CD8-positive, alpha-beta T cell (primary cell): ENCODE measurements at regions of chr10 and their contacts with region 1.

Region 1: GRCh38 chr10:5446390-5446926 is 34.1 kb downstream of the NET1 start:
- DNase-seq: peak; percentile 42 to 83 (median 73)
- ATAC-seq: peak; percentile 67
- H3K4me3 ChIP-seq: peak overlapping the region; percentile 32 to 54
- H3K4me3 Mint-ChIP-seq: peak overlapping the region; percentile 85
- H3K27ac ChIP-seq: peak overlapping the region in 1 of 2 experiments; percentile 45
- H3K27ac Mint-ChIP-seq: peak overlapping the region; percentile 87
- H3K4me1 ChIP-seq: peaks cover 25% of the 10 kb centered on the region
- H3K4me1 Mint-ChIP-seq: peaks cover 32% of the 10 kb centered on the region
- H3K27me3 ChIP-seq: no peaks in the 10 kb centered on the region
- H3K27me3 Mint-ChIP-seq: no peaks in the 10 kb centered on the region
- CTCF ChIP-seq: no peak

Region 2: GRCh38 chr10:5423771-5424170 is 22.7 kb before region 1 on chr10:
- CTCF ChIA-PET with region 1: interaction called, 10 read pairs
- POLR2A ChIA-PET with region 1: interaction called, 3 read pairs
- intact Hi-C with region 1: no loop called
- DNase-seq: no peak
- ATAC-seq: no peak
- H3K4me3 ChIP-seq: no peak overlapping the region
- H3K4me3 Mint-ChIP-seq: no peak overlapping the region
- H3K27ac ChIP-seq: no peak overlapping the region
- H3K27ac Mint-ChIP-seq: no peak overlapping the region
- H3K4me1 ChIP-seq: no peaks in the 10 kb centered on the region
- H3K4me1 Mint-ChIP-seq: no peaks in the 10 kb centered on the region
- H3K27me3 ChIP-seq: no peaks in the 10 kb centered on the region
- H3K27me3 Mint-ChIP-seq: no peaks in the 10 kb centered on the region
- CTCF ChIP-seq: no peak

Region 3: DNA sequence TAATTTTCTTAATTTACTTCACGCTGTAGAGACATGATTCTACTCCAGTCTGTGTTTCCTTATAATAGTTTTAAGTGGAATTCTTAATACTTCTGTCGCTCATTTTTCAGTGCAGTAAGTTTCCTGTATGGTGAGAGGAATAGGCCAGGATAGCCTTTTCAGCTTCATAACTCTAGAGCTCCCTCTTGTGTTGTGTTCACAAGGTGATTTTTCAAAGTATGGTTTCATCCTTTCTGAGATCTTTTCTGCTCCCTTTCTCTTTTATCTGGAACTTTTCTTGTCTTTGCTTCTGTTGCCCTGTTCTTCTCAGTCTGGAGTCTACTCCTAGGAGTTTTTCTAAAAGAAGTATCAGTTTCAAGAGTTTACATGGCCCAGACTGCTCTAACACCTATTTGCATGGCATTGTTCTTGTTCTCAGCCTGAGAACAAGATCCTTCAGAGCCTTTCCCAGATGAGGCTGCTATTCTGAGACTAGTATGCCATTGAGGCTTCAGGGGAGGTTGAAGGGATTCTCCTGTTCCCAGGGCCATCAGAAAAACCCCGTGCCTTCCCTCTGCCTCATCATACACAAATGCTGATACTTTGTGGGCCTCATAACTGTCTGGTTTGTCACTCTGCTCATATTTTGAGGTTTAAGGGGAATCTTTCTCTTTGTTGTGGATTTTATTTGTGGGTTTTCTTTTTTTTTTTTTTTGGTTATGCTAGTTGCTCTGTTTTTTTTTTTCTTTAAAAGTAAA is 12.3 kb before region 1 on chr10:
- CTCF ChIA-PET with region 1: interaction called, 12 read pairs
- POLR2A ChIA-PET with region 1: no interaction called
- intact Hi-C with region 1: no loop called
- DNase-seq: peak in 2 of 9 experiments; percentile 46 to 57
- ATAC-seq: peak; percentile 58
- H3K4me3 ChIP-seq: no peak overlapping the region
- H3K4me3 Mint-ChIP-seq: no peak overlapping the region
- H3K27ac ChIP-seq: no peak overlapping the region
- H3K27ac Mint-ChIP-seq: peak overlapping the region; percentile 49
- H3K4me1 ChIP-seq: peaks cover 5% of the 10 kb centered on the region
- H3K4me1 Mint-ChIP-seq: peaks cover 12% of the 10 kb centered on the region
- H3K27me3 ChIP-seq: no peaks in the 10 kb centered on the region
- H3K27me3 Mint-ChIP-seq: no peaks in the 10 kb centered on the region
- CTCF ChIP-seq: peak; percentile 69

Region 4: GRCh38 chr10:5461914-5462840 is 15.7 kb after region 1 on chr10:
- CTCF ChIA-PET with region 1: interaction called, 11 read pairs
- POLR2A ChIA-PET with region 1: interaction called, 3 read pairs
- intact Hi-C with region 1: no loop called
- DNase-seq: no peak
- ATAC-seq: no peak
- H3K4me3 ChIP-seq: no peak overlapping the region
- H3K4me3 Mint-ChIP-seq: no peak overlapping the region
- H3K27ac ChIP-seq: no peak overlapping the region
- H3K27ac Mint-ChIP-seq: no peak overlapping the region
- H3K4me1 ChIP-seq: peaks cover 13% of the 10 kb centered on the region
- H3K4me1 Mint-ChIP-seq: peaks cover 12% of the 10 kb centered on the region
- H3K27me3 ChIP-seq: no peaks in the 10 kb centered on the region
- H3K27me3 Mint-ChIP-seq: no peaks in the 10 kb centered on the region
- CTCF ChIP-seq: no peak

Region 5: GRCh38 chr10:5563991-5564536 is 117.6 kb after region 1 on chr10:
- CTCF ChIA-PET with region 1: interaction called, 4 read pairs
- POLR2A ChIA-PET with region 1: interaction called, 3 read pairs
- intact Hi-C with region 1: loop called in 1 of 2 experiments (anchors 2 kb)
- DNase-seq: peak in 7 of 9 experiments; percentile 29 to 65 (median 50)
- ATAC-seq: peak; percentile 77
- H3K4me3 ChIP-seq: peak overlapping the region; percentile 25 to 50
- H3K4me3 Mint-ChIP-seq: peak overlapping the region; percentile 83
- H3K27ac ChIP-seq: peak overlapping the region; percentile 55 to 72
- H3K27ac Mint-ChIP-seq: peak overlapping the region; percentile 99
- H3K4me1 ChIP-seq: peaks cover 13% of the 10 kb centered on the region
- H3K4me1 Mint-ChIP-seq: peaks cover 17% of the 10 kb centered on the region
- H3K27me3 ChIP-seq: no peaks in the 10 kb centered on the region
- H3K27me3 Mint-ChIP-seq: no peaks in the 10 kb centered on the region
- CTCF ChIP-seq: no peak

Region 6: DNA sequence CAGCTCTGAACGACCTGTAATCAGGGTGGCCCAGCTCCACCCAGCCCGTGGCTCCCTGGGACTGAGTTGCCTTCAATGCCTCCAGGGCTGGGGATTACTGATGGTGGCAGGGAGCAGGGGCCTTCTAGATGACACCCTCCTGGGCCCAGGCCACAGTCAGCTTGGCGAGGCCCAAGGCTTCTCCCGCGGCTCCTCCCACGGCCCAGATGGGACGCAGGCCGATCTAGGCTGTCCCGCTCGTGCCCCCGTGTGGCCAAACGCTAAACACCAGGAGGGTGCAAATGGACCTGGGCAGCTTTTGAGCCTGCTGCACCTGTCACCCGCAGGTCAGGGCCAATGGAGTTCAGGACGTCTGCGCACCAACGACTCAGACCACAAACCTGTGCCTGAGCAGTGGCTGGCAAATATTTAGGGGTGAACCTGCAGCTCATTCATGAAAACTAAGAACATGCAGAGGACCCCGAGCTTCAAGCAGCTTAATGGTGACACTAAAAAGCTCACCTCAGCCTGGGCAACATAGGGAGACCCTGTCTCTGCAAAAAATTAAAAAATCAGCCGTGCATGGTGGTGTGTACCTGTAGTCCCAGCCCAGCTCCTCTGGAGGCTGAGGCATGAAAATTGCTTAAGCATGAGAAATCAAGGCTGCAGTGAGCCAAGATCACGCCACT is 176.8 kb after region 1 on chr10:
- CTCF ChIA-PET with region 1: interaction called, 377 read pairs
- POLR2A ChIA-PET with region 1: interaction called, 8 read pairs
- intact Hi-C with region 1: loop called (anchors 1 kb)
- DNase-seq: peak; percentile 50 to 84 (median 77)
- ATAC-seq: peak; percentile 98
- H3K4me3 ChIP-seq: no peak overlapping the region
- H3K4me3 Mint-ChIP-seq: no peak overlapping the region
- H3K27ac ChIP-seq: no peak overlapping the region
- H3K27ac Mint-ChIP-seq: no peak overlapping the region
- H3K4me1 ChIP-seq: peaks cover 4% of the 10 kb centered on the region
- H3K4me1 Mint-ChIP-seq: no peaks in the 10 kb centered on the region
- H3K27me3 ChIP-seq: no peaks in the 10 kb centered on the region
- H3K27me3 Mint-ChIP-seq: no peaks in the 10 kb centered on the region
- CTCF ChIP-seq: peak; percentile 85

Region 7: DNA sequence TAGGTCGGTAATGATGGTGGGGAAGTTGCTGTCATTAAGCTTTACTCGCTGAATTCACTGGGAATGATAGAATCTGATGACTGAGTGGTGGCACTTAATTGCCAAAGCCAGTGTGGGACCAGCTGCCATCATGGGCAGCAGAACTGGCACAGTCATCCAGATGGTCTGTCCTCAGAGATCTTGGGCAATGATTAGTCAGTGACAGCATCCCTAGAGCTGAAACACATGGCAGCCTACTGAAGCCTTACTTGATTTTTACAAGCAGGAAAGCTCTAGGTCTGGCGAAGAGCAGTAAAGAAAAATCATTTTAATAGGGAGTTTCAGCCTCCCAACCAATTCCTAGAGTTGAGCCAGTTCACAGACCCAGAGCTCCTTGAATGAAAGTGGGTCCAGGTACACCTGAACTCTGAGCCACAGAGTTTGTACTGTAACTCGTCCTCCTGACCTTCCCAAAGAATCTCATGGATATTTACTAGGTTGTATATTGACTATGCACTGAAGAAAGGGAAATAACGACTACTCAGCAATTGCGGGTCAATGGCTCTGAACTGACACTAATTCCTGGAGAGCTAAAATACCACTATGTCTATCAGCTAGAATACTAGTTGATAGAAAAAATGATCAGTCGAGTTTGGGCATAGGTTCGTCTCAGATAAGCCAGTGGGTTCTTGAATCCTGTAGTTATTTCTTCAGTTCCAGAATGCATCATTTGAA is 224.4 kb after region 1 on chr10:
- CTCF ChIA-PET with region 1: no interaction called
- POLR2A ChIA-PET with region 1: no interaction called
- intact Hi-C with region 1: no loop called
- DNase-seq: no peak
- ATAC-seq: no peak
- H3K4me3 ChIP-seq: no peak overlapping the region
- H3K4me3 Mint-ChIP-seq: no peak overlapping the region
- H3K27ac ChIP-seq: no peak overlapping the region
- H3K27ac Mint-ChIP-seq: no peak overlapping the region
- H3K4me1 ChIP-seq: peaks cover 4% of the 10 kb centered on the region
- H3K4me1 Mint-ChIP-seq: peaks cover 7% of the 10 kb centered on the region
- H3K27me3 ChIP-seq: no peaks in the 10 kb centered on the region
- H3K27me3 Mint-ChIP-seq: peaks cover 7% of the 10 kb centered on the region
- CTCF ChIP-seq: no peak

Region 8: DNA sequence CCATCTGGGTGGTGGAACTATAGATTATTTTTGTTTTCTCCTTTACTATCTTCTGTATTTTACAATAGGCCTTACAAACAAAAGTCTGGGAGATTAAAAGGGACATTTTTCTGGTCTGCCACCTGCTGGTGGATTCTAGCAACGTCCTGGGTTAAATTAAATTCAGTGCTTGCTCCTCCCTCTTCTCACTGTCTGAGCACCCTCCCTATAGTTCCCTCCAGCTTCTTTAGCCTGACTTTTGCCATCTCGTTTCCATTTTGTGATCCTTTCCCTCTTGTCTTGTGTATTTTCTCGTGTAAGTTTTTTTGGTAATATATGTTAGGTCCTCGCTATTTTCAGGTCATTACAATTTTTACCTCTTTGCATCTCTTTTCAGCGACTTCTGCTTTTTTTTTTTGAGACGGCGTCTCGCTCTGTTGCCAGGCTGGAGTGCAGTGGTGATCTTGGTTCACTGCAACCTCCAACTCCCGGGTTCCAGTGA is 427.1 kb after region 1 on chr10:
- CTCF ChIA-PET with region 1: interaction called, 5 read pairs
- POLR2A ChIA-PET with region 1: no interaction called
- intact Hi-C with region 1: loop called (anchors 1 to 5 kb)
- DNase-seq: peak; percentile 45 to 77 (median 66)
- ATAC-seq: peak; percentile 99
- H3K4me3 ChIP-seq: no peak overlapping the region
- H3K4me3 Mint-ChIP-seq: peak overlapping the region; percentile 50
- H3K27ac ChIP-seq: no peak overlapping the region
- H3K27ac Mint-ChIP-seq: no peak overlapping the region
- H3K4me1 ChIP-seq: no peaks in the 10 kb centered on the region
- H3K4me1 Mint-ChIP-seq: peaks cover 2% of the 10 kb centered on the region
- H3K27me3 ChIP-seq: no peaks in the 10 kb centered on the region
- H3K27me3 Mint-ChIP-seq: no peaks in the 10 kb centered on the region
- CTCF ChIP-seq: peak; percentile 68